ENCODE measurements at regions of chr16 and their contacts with region 1.

Region 1: GRCh38 chr16:80976946-80977345 is 29.7 kb downstream of the CMC2 start:
- DNase-seq: no peak
- H3K4me3 Mint-ChIP-seq: no peak overlapping the region
- H3K27ac Mint-ChIP-seq: no peak overlapping the region
- H3K4me1 Mint-ChIP-seq: peaks cover 29% of the 10 kb centered on the region
- H3K27me3 Mint-ChIP-seq: no peaks in the 10 kb centered on the region
- CTCF ChIP-seq: no peak

Region 2: DNA sequence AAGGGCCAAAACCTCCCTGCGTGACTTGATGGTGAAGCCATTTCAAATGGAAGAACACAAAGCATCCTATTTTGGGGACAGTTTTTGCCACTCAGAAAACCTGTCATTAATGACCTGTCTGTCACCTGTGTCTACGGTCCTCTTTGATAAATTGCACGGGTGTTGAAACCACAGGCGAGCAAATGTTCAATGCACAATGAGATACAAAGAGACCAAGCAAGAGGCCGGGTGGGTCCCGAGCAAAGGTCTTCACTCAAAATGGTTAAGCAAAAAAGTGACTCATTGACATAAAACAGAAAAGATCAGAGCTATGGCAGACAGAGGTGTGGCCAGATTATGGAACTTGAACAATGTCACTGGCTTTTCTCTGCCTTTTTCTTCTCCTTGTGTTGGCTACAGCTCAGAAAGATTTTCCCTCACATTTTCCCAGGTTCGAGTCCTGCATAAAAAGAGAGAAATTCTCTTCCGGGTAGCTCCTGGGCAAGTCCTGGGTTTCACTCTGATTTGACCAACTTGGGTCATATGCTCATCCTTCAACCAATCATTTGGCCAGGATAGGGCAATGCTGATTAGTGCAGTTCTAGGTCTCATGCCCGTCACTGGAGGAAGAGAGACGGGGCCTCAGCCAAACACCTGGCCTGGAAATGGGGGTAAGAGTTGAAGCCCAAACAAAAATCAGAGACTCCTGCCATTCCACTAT is 62.4 kb before region 1 on chr16:
- CTCF ChIA-PET with region 1: no interaction called
- intact Hi-C with region 1: no loop called
- DNase-seq: no peak
- H3K4me3 Mint-ChIP-seq: no peak overlapping the region
- H3K27ac Mint-ChIP-seq: no peak overlapping the region
- H3K4me1 Mint-ChIP-seq: no peaks in the 10 kb centered on the region
- H3K27me3 Mint-ChIP-seq: peaks cover 59% of the 10 kb centered on the region
- CTCF ChIP-seq: no peak

Region 3: GRCh38 chr16:80993307-80993706 is 16.4 kb after region 1 on chr16:
- CTCF ChIA-PET with region 1: interaction called, 4 read pairs
- intact Hi-C with region 1: loop called (anchors 2 kb)
- DNase-seq: peak; percentile 35
- H3K4me3 Mint-ChIP-seq: peak overlapping the region; percentile 48
- H3K27ac Mint-ChIP-seq: peak overlapping the region; percentile 75
- H3K4me1 Mint-ChIP-seq: peaks cover 72% of the 10 kb centered on the region
- H3K27me3 Mint-ChIP-seq: no peaks in the 10 kb centered on the region
- CTCF ChIP-seq: no peak

Region 4: GRCh38 chr16:81053761-81054160 is 76.8 kb after region 1 on chr16:
- CTCF ChIA-PET with region 1: no interaction called
- intact Hi-C with region 1: no loop called
- DNase-seq: no peak
- H3K4me3 Mint-ChIP-seq: no peak overlapping the region
- H3K27ac Mint-ChIP-seq: no peak overlapping the region
- H3K4me1 Mint-ChIP-seq: no peaks in the 10 kb centered on the region
- H3K27me3 Mint-ChIP-seq: no peaks in the 10 kb centered on the region
- CTCF ChIP-seq: no peak

Region 5: DNA sequence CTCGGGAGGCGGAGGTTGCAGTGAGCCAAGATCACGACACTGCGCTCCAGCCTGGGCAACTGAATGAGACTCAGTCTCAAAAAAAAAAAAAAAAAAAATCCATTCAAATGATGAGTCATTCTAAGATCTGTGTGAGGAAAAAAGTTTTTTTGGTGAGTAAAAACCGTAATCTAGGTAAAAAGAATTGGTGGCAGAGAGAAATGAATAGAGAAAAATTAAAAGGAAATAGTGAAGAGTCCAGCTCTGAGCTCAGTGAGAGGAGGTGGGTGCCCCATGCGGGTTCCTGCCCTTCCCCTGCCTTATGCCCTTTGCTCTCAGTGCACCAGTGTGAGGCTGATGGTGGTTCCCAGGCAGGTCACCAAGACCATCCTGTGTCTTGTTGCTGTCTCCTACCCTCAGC is 358.7 kb after region 1 on chr16:
- CTCF ChIA-PET with region 1: no interaction called
- intact Hi-C with region 1: no loop called
- DNase-seq: no peak
- H3K4me3 Mint-ChIP-seq: no peak overlapping the region
- H3K27ac Mint-ChIP-seq: no peak overlapping the region
- H3K4me1 Mint-ChIP-seq: no peaks in the 10 kb centered on the region
- H3K27me3 Mint-ChIP-seq: no peaks in the 10 kb centered on the region
- CTCF ChIP-seq: no peak